PC-9 (cell line): ENCODE measurements at regions of chr20 and their contacts with region 1.

Region 1: DNA sequence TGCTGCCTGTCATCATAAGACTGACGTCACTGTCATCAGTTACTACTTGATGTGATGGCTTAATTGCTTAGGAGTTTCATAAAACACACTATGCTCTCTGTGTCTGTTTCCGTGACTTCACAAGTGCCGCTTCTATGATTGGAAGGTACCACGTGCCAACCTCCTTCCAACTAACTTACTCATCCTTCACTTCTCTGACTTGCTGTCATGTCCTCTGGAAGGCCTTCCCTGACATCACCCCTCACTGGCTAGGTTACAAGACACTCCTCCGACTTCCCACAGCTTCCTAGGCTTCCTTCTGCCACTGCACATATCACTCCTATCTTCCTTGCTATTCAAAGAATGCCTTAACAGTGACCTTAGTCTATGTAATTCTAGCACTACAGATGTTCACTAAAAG is 20.4 kb downstream of the SERINC3 start:
- DNase-seq: no peak
- H3K4me3 ChIP-seq: no peak overlapping the region
- H3K27ac ChIP-seq: no peak overlapping the region
- H3K4me1 ChIP-seq: peaks cover 17% of the 10 kb centered on the region
- H3K27me3 ChIP-seq: no peaks in the 10 kb centered on the region
- CTCF ChIP-seq: no peak

Region 2: GRCh38 chr20:44388466-44389023 is 112.9 kb before region 1 on chr20:
- CTCF ChIA-PET with region 1: no interaction called
- POLR2A ChIA-PET with region 1: no interaction called
- intact Hi-C with region 1: no loop called
- DNase-seq: peak; percentile 68 to 73
- H3K4me3 ChIP-seq: no peak overlapping the region
- H3K27ac ChIP-seq: no peak overlapping the region
- H3K4me1 ChIP-seq: no peaks in the 10 kb centered on the region; the same call in 1 of the 2 replicates
- H3K27me3 ChIP-seq: no peaks in the 10 kb centered on the region
- CTCF ChIP-seq: peak; percentile 95

Region 3: DNA sequence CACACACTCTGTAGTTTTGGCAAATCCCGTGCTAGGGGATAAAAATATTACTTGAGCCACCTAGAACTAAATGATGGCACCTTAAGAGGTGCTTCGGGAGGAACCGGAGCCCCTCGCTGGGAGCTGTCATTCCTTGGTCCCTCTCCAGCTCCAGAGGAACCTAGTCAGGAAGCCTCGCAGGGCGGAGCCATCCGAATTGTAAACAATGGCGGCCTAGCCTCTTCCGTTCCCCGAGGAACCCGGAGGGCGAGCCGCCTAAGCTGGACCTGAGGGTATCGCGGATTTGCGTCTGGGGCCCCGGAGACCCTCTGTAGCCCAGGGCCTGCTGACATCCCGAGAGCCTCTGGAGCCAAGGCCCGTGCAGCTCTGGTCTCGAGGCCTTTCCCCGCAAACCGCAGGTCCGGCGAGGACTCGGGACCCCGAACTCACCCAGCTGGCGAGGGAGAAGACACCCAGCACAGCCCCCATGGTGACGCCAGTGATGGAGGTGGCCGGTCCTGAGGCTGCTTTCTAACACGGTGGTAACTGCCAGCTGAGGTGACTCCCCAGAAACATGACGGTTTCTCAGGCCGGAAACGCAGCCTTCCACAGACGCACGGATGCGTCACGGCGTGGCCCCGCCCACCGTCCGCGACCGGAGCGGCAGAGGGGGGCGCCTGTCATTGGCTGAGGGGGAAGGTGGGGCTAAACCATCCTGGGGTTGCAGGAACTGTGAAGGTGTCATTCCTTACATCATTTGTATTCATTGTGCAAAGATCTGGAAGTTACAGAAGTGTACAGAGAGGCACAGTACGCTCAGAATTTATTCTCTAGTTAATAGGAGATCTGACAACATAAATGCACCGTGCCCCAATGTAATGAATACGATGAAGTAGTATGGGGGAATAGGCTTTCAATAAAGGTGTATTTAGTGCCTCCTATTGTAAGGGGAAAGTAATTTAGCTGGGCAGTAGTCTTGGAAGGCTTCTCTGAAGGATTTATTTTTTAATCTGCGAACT is 20.3 kb after region 1 on chr20 and contains the start of gene SERINC3:
- CTCF ChIA-PET with region 1: no interaction called
- POLR2A ChIA-PET with region 1: interaction called, 32 read pairs
- intact Hi-C with region 1: no loop called
- DNase-seq: peak; percentile 93 to 96
- H3K4me3 ChIP-seq: peak within 1 kb of the TSS; percentile 92
- H3K27ac ChIP-seq: peak within 1 kb of the TSS; percentile 72
- H3K4me1 ChIP-seq: peaks cover 39% of the 10 kb centered on the region
- H3K27me3 ChIP-seq: no peaks in the 10 kb centered on the region
- CTCF ChIP-seq: 0 out of 2 replicates have a peak, but pooled peaks have one; percentile 39
- total RNA-seq, gene SERINC3: 76.0 and 110 TPM in 2 replicates

Region 4: DNA sequence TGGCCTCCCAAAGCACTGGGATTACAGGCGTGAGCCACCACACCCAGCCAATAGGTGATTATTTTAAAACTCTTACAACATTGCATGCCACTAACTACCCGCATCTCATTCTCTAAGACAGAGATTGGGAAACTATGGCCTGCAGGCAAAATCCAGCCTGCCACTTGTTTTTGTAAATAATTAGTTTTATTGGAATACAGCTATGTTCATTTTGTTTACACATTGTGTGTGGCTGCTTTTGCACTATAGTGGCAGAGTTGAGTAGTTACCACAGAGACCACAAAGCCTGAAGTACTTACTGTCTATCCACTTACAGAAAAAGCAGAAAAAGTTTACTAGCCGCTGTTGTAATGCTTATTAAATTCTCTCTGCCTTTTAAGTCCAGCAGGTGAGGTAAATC is 64.6 kb after region 1 on chr20:
- CTCF ChIA-PET with region 1: no interaction called
- POLR2A ChIA-PET with region 1: no interaction called
- intact Hi-C with region 1: no loop called
- DNase-seq: peak in 1 of 2 experiments; percentile 83
- H3K4me3 ChIP-seq: no peak overlapping the region
- H3K27ac ChIP-seq: no peak overlapping the region
- H3K4me1 ChIP-seq: peaks cover 4% of the 10 kb centered on the region; the same call in 1 of the 2 replicates
- H3K27me3 ChIP-seq: no peaks in the 10 kb centered on the region
- CTCF ChIP-seq: no peak

Region 5: DNA sequence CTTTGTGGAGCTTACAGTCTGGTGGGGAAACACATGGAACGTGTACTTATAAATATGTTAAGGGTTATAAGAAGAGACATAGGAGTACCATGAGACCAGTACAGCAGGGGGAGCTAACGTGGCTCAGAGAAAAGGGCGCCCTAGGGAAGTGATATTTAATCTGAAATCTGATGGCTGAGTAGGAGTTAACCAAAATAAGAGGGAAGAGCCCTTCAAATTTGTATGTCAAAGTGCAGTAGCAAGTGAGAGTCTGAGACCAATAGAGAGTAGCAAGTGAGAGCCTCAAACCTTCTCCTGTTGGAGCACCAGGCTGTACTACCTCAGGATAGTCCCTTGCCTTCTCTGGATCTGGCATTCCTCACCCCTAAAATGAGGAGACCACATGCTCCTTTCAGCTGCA is 74.8 kb after region 1 on chr20:
- CTCF ChIA-PET with region 1: no interaction called
- POLR2A ChIA-PET with region 1: no interaction called
- intact Hi-C with region 1: no loop called
- DNase-seq: peak in 1 of 2 experiments; percentile 42
- H3K4me3 ChIP-seq: no peak overlapping the region
- H3K27ac ChIP-seq: peak overlapping the region; percentile 14; the same call in 1 of the 2 replicates
- H3K4me1 ChIP-seq: peaks cover 46% of the 10 kb centered on the region
- H3K27me3 ChIP-seq: no peaks in the 10 kb centered on the region
- CTCF ChIP-seq: peak; percentile 30; the same call in 1 of the 2 replicates